Activated naive CD4-positive, alpha-beta T cell treated with anti-CD3 and anti-CD28 coated beads for 36 hours (primary cell): ENCODE measurements at regions of chr17 and their contacts with region 1.

Region 1: GRCh38 chr17:27544350-27545131 is 86.4 kb upstream of the LGALS9 start:
- DNase-seq: peak; percentile 92
- H3K4me3 Mint-ChIP-seq: peak overlapping the region; percentile 50
- H3K27ac Mint-ChIP-seq: peak overlapping the region; percentile 96
- H3K4me1 Mint-ChIP-seq: peaks cover 76% of the 10 kb centered on the region
- H3K27me3 Mint-ChIP-seq: no peaks in the 10 kb centered on the region

Region 2: DNA sequence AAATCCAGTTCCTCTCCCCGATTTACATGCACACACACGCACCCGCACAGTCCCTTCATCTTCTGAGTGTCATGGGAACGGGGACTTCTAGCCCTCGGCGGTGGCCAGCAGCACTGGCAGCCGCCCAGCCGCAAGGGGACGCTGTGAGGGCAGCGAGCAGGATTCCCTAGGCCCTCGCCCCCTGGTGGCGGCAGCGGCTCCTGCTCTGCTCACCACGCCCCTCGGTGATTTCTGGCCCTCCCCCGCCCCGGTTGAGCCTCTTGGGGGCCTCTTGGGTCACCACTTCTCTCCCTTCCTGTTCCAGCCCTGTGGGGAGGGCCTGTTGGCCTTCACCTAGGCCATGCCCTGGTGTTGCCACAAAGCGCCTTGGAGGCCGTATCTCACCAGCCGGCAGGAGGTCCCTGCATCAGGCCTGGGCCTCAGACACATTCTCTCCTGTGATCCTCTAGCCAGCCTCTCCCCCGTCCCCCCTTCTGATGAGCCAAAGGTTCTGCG is 163.5 kb before region 1 on chr17:
- CTCF ChIA-PET with region 1: no interaction called
- intact Hi-C with region 1: loop called (anchors 5 kb)
- DNase-seq: peak; percentile 87
- H3K4me3 Mint-ChIP-seq: no peak overlapping the region
- H3K27ac Mint-ChIP-seq: no peak overlapping the region
- H3K4me1 Mint-ChIP-seq: no peaks in the 10 kb centered on the region
- H3K27me3 Mint-ChIP-seq: peaks cover 24% of the 10 kb centered on the region

Region 3: DNA sequence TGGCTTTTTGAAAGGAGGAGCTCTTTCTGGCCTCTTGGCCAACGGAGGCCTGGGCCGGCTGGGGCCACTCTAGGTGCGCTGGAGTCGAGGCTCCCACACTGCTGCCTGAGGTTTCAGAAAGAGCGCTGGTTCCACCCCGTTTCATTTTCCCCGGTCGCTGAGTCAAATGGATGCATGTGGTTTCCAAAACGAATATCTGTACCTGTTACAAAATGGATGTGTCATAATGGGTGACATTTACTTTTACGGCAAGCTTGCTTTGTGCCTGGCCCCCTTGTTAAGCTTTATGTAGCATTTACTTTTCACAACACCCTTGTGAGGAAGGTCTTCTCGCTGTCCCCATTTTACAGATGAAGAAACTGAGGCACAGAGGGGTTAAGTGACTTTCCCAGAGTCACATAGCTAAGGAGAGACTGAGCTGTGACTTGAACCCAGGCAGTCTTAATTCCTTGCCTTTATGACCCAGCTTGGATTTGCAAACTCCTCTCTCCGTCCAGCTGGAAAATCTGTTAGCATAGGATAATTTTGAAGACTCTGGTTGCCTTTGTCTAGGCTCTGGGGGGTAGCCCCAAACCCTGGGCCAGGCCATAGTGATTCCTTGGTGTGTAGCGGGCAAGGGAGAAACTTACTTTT is 77.7 kb before region 1 on chr17:
- CTCF ChIA-PET with region 1: interaction called, 43 read pairs
- intact Hi-C with region 1: loop called (anchors 1 kb)
- DNase-seq: peak; percentile 94
- H3K4me3 Mint-ChIP-seq: peak overlapping the region; percentile 67
- H3K27ac Mint-ChIP-seq: peak overlapping the region; percentile 98
- H3K4me1 Mint-ChIP-seq: peaks cover 88% of the 10 kb centered on the region
- H3K27me3 Mint-ChIP-seq: no peaks in the 10 kb centered on the region

Region 4: DNA sequence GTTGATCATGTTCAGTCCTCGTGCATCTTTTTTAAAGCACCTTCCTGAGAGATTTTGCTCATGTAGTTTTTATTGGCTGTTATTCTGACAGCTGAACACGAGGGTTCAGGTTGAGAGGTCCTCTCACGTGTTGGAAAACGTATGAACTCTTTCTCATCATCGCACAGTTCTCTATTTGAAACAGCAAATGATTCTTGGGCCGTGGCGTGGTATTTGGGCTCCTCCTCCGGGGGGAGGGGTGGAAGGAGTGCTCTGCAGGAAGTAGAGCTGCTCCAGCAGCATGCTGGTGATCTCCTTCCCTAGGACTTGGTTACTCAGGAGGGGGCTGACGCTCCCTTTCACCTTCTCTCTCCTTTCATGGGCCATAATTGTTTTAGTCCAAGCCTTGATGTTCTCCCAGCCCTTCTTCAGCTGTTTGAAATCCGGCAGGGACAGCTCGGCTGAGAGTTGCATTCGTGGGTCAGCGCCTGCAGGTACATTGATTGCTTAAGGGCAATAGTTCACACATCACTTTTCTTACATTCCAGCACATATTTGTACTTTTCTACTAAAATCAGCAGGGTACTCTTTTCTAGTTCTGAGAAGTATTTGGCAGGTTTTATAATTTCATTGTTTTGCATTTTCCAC is 17.8 kb before region 1 on chr17:
- CTCF ChIA-PET with region 1: no interaction called
- intact Hi-C with region 1: loop called (anchors 1 kb)
- DNase-seq: peak; percentile 83
- H3K4me3 Mint-ChIP-seq: no peak overlapping the region
- H3K27ac Mint-ChIP-seq: no peak overlapping the region
- H3K4me1 Mint-ChIP-seq: peaks cover 80% of the 10 kb centered on the region
- H3K27me3 Mint-ChIP-seq: no peaks in the 10 kb centered on the region

Region 5: DNA sequence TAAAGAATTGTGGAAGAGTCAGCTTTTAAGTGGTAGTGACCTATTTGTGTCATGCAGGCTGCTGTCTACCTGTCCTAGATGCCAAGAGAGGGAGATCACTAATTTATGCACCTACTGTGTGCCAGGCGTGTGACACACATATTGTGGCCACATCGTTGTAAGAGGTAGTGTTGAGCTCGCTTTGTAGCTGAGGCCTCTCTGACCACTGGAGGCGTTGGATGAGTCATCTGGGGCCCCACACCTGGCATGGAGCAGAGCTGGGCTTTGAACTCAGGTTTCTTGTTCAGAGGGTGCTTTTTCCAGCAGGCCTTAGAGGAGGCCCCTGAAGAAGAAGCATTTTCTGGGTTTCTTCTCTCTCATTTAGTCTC is 34.2 kb after region 1 on chr17:
- CTCF ChIA-PET with region 1: interaction called, 10 read pairs
- intact Hi-C with region 1: loop called (anchors 1 kb)
- DNase-seq: peak; percentile 93
- H3K4me3 Mint-ChIP-seq: no peak overlapping the region
- H3K27ac Mint-ChIP-seq: peak overlapping the region; percentile 93
- H3K4me1 Mint-ChIP-seq: peaks cover 67% of the 10 kb centered on the region
- H3K27me3 Mint-ChIP-seq: no peaks in the 10 kb centered on the region